ENCODE measurements at regions of chr16 and their contacts with region 1.

Region 1: DNA sequence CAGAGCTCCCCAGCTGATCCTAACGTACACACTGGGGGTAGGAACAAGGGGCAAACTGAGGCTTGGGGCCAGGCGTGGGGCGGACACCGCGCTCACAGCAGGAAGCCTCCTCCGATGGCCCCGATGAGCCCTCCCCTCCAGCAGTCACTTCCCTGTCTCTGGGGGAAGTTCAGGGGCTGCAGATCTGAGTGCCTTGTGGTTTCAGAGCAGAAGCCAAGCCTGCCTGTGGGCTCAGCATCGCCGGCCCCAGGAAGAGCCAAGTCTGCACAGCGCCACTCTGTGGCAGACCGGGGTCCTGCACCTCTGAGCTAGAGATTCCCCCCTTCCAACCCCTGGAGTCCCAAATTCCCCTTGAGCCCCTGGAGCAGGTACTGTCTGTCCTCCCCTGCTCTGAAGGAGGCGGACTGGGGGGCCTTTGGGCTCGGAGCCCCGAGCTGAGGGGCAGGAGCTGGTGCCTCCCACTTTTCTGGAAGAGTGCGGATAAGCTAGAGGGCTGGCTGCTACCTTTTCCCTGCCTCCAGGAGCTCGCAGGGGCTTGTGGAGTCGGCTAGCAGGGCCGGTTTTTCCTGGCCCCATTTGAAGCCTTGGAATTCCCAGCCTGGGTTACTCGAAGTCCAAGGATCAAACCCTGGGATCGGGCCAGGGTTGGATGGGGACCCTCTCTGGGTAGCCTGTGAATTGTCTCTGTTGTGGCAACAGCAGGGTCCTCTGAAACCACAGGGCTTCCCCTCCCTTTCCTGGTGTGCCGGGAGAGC is 2.9 kb downstream of the GSE1 start:
- DNase-seq: peak; percentile 89
- ATAC-seq: peak; percentile 42
- H3K4me3 Mint-ChIP-seq: peak overlapping the region; percentile 15
- H3K27ac Mint-ChIP-seq: no peak overlapping the region
- H3K4me1 Mint-ChIP-seq: peaks cover 30% of the 10 kb centered on the region
- H3K27me3 Mint-ChIP-seq: peaks cover 10% of the 10 kb centered on the region

Region 2: GRCh38 chr16:85369741-85370528 is 246.1 kb before region 1 on chr16:
- CTCF ChIA-PET with region 1: interaction called, 11 read pairs
- POLR2A ChIA-PET with region 1: no interaction called
- intact Hi-C with region 1: no loop called
- DNase-seq: peak; percentile 73
- ATAC-seq: peak; percentile 56
- H3K4me3 Mint-ChIP-seq: no peak overlapping the region
- H3K27ac Mint-ChIP-seq: no peak overlapping the region
- H3K4me1 Mint-ChIP-seq: peaks cover 9% of the 10 kb centered on the region
- H3K27me3 Mint-ChIP-seq: no peaks in the 10 kb centered on the region

Region 3: GRCh38 chr16:85420501-85421337 is 195.3 kb before region 1 on chr16:
- CTCF ChIA-PET with region 1: interaction called, 71 read pairs
- POLR2A ChIA-PET with region 1: no interaction called
- intact Hi-C with region 1: loop called in 1 of 2 experiments (anchors 1 kb)
- DNase-seq: peak; percentile 89
- ATAC-seq: peak; percentile 76
- H3K4me3 Mint-ChIP-seq: no peak overlapping the region
- H3K27ac Mint-ChIP-seq: no peak overlapping the region
- H3K4me1 Mint-ChIP-seq: peaks cover 7% of the 10 kb centered on the region
- H3K27me3 Mint-ChIP-seq: no peaks in the 10 kb centered on the region

Region 4: DNA sequence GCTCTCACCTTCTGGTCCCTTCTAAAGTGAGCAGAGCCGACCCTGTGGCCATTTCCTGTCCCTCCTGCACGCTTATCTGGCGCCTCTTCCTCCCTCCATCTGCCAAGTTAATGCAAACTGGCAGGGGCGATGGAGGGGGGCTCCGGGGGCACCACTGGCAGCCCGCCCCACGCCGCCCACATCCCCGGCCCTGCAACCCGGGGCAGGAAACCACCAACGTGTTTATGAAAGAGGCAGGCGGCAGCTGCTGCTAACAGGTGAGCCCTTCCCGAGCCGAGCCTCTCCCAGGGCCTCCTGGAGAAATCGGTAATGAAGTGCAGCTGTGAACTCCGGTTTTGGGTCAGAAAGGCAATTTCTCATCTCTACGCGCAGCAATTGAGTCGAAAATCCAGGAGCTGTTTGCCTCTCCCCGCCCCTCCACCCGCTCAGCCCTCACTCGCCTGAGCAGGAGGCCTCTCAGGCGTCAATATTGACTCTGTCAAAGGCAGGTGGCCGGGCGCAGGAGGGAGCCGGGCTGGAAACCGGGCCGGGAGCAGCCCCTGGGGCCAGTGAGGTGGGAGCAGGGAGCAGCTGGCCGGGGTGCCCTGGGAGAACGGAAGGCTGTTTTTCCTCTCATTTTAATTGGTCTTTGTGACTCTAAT is 167.4 kb before region 1 on chr16:
- CTCF ChIA-PET with region 1: interaction called, 11 read pairs
- POLR2A ChIA-PET with region 1: no interaction called
- intact Hi-C with region 1: no loop called
- DNase-seq: peak; percentile 43
- ATAC-seq: peak; percentile 50
- H3K4me3 Mint-ChIP-seq: no peak overlapping the region
- H3K27ac Mint-ChIP-seq: peak overlapping the region; percentile 42
- H3K4me1 Mint-ChIP-seq: peaks cover 30% of the 10 kb centered on the region
- H3K27me3 Mint-ChIP-seq: no peaks in the 10 kb centered on the region

Region 5: GRCh38 chr16:85491058-85491771 is 124.8 kb before region 1 on chr16:
- CTCF ChIA-PET with region 1: interaction called, 22 read pairs
- POLR2A ChIA-PET with region 1: no interaction called
- intact Hi-C with region 1: loop called in 1 of 2 experiments (anchors 5 kb)
- DNase-seq: peak; percentile 69
- ATAC-seq: peak; percentile 60
- H3K4me3 Mint-ChIP-seq: no peak overlapping the region
- H3K27ac Mint-ChIP-seq: no peak overlapping the region
- H3K4me1 Mint-ChIP-seq: peaks cover 1% of the 10 kb centered on the region
- H3K27me3 Mint-ChIP-seq: peaks cover 3% of the 10 kb centered on the region

Region 6: DNA sequence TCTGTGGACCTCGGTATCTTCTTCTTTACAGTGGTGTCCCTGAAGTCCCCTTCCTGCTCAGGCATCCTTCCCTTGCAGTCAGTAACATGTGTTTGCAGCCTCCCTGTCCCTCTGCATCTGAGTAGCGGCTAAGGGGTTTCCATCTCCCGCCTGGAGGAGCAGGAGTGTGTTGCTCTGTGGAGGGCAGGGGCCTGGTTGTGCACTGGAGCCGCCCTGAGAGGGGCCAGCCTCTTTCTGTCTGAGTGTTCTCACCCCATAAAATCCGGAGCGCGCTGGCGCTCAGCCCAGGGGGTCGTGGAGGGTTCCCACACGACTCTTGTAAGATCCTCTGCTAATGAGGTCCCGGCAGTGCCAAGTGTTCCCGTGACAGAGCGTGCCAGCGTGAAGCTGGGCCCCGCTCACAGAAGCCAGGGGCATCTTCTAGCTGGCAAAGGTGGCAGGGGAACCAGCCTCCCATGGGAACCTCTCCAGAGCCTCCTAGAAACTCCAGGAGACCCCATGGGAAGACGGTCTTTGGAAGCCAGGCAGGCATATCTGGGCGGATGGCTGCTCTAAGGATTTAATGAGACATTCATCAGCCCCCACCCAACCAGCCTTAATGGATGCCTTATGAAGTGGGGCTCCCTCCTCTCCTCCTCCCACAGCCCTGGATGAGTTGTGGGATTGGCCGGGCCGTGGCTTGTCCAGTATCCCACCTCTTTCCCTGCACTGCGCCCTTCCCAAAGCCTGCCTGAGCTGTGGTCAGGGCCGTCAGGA is 94.3 kb before region 1 on chr16:
- CTCF ChIA-PET with region 1: no interaction called
- POLR2A ChIA-PET with region 1: no interaction called
- intact Hi-C with region 1: no loop called
- DNase-seq: no peak
- ATAC-seq: no peak
- H3K4me3 Mint-ChIP-seq: no peak overlapping the region
- H3K27ac Mint-ChIP-seq: no peak overlapping the region
- H3K4me1 Mint-ChIP-seq: no peaks in the 10 kb centered on the region
- H3K27me3 Mint-ChIP-seq: no peaks in the 10 kb centered on the region

Region 7: GRCh38 chr16:85626191-85626981 is 10.4 kb after region 1 on chr16:
- CTCF ChIA-PET with region 1: interaction called, 10 read pairs
- POLR2A ChIA-PET with region 1: no interaction called
- intact Hi-C with region 1: no loop called
- DNase-seq: no peak
- ATAC-seq: no peak
- H3K4me3 Mint-ChIP-seq: no peak overlapping the region
- H3K27ac Mint-ChIP-seq: no peak overlapping the region
- H3K4me1 Mint-ChIP-seq: peaks cover 9% of the 10 kb centered on the region
- H3K27me3 Mint-ChIP-seq: no peaks in the 10 kb centered on the region

Measured in activated CD4-positive, alpha-beta T cell treated with anti-CD3 and anti-CD28 coated beads for 36 hours (primary cell).